ENCODE measurements at regions of chr14 and their contacts with region 1.

Region 1: GRCh38 chr14:75258615-75259466 is 19.8 kb upstream of the FOS start:
- DNase-seq: peak; percentile 98
- ATAC-seq: peak; percentile 82
- H3K4me3 ChIP-seq: peak overlapping the region; percentile 65
- H3K27ac ChIP-seq: peak overlapping the region; percentile 73
- H3K4me1 ChIP-seq: peaks cover 40% of the 10 kb centered on the region
- H3K27me3 ChIP-seq: no peaks in the 10 kb centered on the region
- CTCF ChIP-seq: no peak

Region 2: GRCh38 chr14:75126679-75127473 is 132.0 kb before region 1 on chr14 and contains the start of gene NEK9:
- CTCF ChIA-PET with region 1: no interaction called
- POLR2A ChIA-PET with region 1: interaction called, 17 read pairs
- intact Hi-C with region 1: no loop called
- DNase-seq: peak; percentile 80
- ATAC-seq: peak; percentile 79
- H3K4me3 ChIP-seq: peak within 1 kb of the TSS; percentile 82
- H3K27ac ChIP-seq: peak within 1 kb of the TSS; percentile 51
- H3K4me1 ChIP-seq: peaks cover 33% of the 10 kb centered on the region
- H3K27me3 ChIP-seq: no peaks in the 10 kb centered on the region
- CTCF ChIP-seq: no peak
- total RNA-seq, gene NEK9: 29.6 and 44.5 TPM in 2 replicates

Region 3: DNA sequence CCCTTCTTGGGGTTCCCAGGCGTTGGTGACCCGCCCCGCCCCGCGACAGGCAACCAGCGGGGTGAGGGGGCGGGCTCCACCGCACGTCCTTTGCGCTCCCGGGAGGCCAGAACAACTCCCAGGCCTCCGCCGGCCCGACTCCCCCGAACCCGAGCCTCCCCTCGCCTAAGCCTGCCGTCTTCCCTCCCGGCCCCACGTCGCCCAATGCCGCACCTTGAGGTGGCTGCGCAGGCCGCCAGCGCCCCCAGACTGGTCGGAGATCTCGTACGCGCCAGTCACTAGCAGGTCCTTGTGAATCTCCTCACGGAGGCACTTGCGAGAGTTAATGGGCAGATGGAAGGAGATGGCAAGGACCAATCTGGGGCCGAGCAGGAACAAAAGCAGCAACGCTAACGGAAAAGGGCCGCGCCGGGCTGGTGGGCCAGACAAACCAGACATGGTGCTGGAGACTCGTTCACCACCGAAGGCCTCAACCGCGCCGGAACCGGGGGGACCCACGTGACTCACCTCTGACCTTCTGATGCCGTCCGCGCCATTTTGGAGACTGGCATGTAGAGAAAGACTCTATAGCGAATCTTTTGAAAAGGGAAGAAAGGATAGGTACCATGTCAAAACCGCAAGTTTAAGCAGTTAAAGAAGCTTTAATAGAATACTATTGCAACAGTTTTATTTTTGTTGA is 82.6 kb before region 1 on chr14 and contains the start of gene TMED10:
- CTCF ChIA-PET with region 1: no interaction called
- POLR2A ChIA-PET with region 1: interaction called, 4 read pairs
- intact Hi-C with region 1: loop called (anchors 2 kb)
- DNase-seq: no peak
- ATAC-seq: peak; percentile 83
- H3K4me3 ChIP-seq: peak within 1 kb of the TSS; percentile 100
- H3K27ac ChIP-seq: peak within 1 kb of the TSS; percentile 71
- H3K4me1 ChIP-seq: peaks cover 9% of the 10 kb centered on the region; the same call in 1 of the 2 replicates
- H3K27me3 ChIP-seq: no peaks in the 10 kb centered on the region
- CTCF ChIP-seq: no peak
- total RNA-seq, gene TMED10: 246 and 253 TPM in 2 replicates

Region 4: DNA sequence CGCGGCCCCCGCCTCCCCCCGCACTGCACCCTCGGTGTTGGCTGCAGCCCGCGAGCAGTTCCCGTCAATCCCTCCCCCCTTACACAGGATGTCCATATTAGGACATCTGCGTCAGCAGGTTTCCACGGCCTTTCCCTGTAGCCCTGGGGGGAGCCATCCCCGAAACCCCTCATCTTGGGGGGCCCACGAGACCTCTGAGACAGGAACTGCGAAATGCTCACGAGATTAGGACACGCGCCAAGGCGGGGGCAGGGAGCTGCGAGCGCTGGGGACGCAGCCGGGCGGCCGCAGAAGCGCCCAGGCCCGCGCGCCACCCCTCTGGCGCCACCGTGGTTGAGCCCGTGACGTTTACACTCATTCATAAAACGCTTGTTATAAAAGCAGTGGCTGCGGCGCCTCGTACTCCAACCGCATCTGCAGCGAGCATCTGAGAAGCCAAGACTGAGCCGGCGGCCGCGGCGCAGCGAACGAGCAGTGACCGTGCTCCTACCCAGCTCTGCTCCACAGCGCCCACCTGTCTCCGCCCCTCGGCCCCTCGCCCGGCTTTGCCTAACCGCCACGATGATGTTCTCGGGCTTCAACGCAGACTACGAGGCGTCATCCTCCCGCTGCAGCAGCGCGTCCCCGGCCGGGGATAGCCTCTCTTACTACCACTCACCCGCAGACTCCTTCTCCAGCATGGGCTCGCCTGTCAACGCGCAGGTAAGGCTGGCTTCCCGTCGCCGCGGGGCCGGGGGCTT is 19.8 kb after region 1 on chr14 and contains the start of gene FOS:
- CTCF ChIA-PET with region 1: no interaction called
- POLR2A ChIA-PET with region 1: interaction called, 6 read pairs
- intact Hi-C with region 1: loop called (anchors 1 kb)
- DNase-seq: peak; percentile 86
- ATAC-seq: peak; percentile 72
- H3K4me3 ChIP-seq: peak within 1 kb of the TSS; percentile 93
- H3K27ac ChIP-seq: peak within 1 kb of the TSS; percentile 79
- H3K4me1 ChIP-seq: peaks cover 16% of the 10 kb centered on the region; the same call in 1 of the 2 replicates
- H3K27me3 ChIP-seq: no peaks in the 10 kb centered on the region; the same call in 1 of the 2 replicates
- CTCF ChIP-seq: no peak
- total RNA-seq, gene FOS: 99.2 and 103 TPM in 2 replicates

Region 5: DNA sequence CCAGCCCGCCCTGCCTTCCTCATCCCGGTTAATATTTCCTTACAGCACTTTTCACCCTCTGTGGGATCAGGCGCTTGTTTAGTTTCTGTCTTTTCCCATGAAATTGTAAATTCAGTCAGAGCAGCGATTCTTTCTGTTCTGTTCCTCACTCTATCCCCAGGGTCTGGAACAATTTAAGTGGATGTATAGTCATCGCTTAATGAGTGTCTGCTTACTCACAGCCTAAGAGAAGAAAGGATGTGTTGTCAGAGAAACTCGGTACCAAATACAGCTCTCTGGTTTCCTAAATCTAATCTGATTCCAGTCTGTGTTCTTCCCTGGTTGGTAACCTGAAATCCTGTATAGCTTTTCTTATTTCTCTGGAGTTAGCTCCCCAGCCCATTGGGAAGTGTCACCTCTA is 64.7 kb after region 1 on chr14:
- CTCF ChIA-PET with region 1: no interaction called
- POLR2A ChIA-PET with region 1: no interaction called
- intact Hi-C with region 1: no loop called
- DNase-seq: peak; percentile 37
- ATAC-seq: peak; percentile 55
- H3K4me3 ChIP-seq: no peak overlapping the region
- H3K27ac ChIP-seq: no peak overlapping the region
- H3K4me1 ChIP-seq: no peaks in the 10 kb centered on the region
- H3K27me3 ChIP-seq: peaks cover 26% of the 10 kb centered on the region
- CTCF ChIP-seq: no peak

Region 6: GRCh38 chr14:75428230-75429104 is 169.6 kb after region 1 on chr14:
- CTCF ChIA-PET with region 1: no interaction called
- POLR2A ChIA-PET with region 1: no interaction called
- intact Hi-C with region 1: no loop called
- DNase-seq: no peak
- ATAC-seq: peak; percentile 50
- H3K4me3 ChIP-seq: peak overlapping the region; percentile 70
- H3K27ac ChIP-seq: no peak overlapping the region
- H3K4me1 ChIP-seq: no peaks in the 10 kb centered on the region
- H3K27me3 ChIP-seq: 0 out of 2 replicates have a peak, but pooled peaks cover 12% of the 10 kb centered on the region
- CTCF ChIP-seq: no peak